Heart left ventricle (tissue), 16 donors: ENCODE measurements at regions of chr2 and their contacts with region 1.

Region 1: GRCh38 chr2:73176881-73177644 is 25.3 kb upstream of the NOTO start:
- DNase-seq: peak; percentile 91 to 95 (median 92)
- ATAC-seq: peak; percentile 85 to 94 (median 93)
- H3K4me3 ChIP-seq: peak overlapping the region; percentile 28 to 71 (median 60)
- H3K27ac ChIP-seq: peak overlapping the region; percentile 63 to 87 (median 77)
- H3K4me1 ChIP-seq: peaks cover 0 to 31% (median 23%) of the 10 kb centered on the region in 12 donors
- H3K27me3 ChIP-seq: peaks cover 0 to 43% (median 7%) of the 10 kb centered on the region in 9 donors
- CTCF ChIP-seq: peak; percentile 96 to 99 (median 98)
- POLR2A ChIP-seq: peak in 1 of 2 donors; percentile 33

Region 2: GRCh38 chr2:72770879-72771461 is 406.1 kb before region 1 on chr2:
- intact Hi-C with region 1: loop called in 1 of 10 experiments (anchors 10 kb)
- DNase-seq: peak in 2 of 5 donors; percentile 64 to 66
- ATAC-seq: peak in 3 of 4 donors; percentile 54 to 70 (median 66)
- H3K4me3 ChIP-seq: no peak overlapping the region
- H3K27ac ChIP-seq: no peak overlapping the region
- H3K4me1 ChIP-seq: peaks cover 0 to 10% (median 0%) of the 10 kb centered on the region in 12 donors
- H3K27me3 ChIP-seq: no peaks in the 10 kb centered on the region
- CTCF ChIP-seq: peak; percentile 77 to 94 (median 91)
- POLR2A ChIP-seq: no peak

Region 3: DNA sequence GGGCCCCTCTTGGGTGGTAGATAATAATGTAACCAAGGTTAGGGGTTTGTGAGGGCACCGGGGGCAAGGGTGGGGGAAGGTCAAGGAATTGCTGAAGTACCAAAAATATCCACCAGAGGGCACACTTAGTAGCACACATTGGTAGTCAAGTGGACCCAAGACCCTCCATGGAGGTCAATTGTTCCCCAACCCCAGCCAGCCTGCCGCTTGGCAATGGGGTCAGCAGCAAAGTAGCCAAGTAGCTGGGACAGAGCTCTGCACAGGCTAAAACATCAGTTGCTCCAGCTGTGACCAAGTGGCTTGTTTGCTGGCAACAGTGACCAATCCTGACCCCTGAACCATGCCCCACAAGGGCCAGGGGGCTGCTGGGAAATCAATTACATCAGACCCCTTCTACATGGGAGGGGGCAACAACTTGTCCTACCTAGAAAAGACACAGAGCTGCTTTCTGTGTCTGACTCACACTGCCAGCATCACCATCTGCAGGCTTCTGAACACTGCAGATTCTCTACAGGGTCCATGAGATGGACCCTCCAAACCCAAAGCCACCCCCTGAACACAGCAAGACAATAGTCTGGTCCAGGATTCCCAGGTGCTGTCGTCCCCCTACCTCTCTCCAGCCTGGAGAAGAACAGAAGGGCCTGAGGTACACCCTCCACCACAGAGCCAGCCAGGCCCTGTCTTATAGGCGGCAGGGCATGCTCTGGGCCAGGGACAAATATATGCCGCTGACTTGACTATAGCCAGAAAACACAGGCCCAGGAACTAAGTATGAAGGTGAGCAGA is 183.7 kb before region 1 on chr2:
- intact Hi-C with region 1: loop called in 4 of 10 experiments (anchors 5 kb)
- DNase-seq: peak in 1 of 5 donors; percentile 23
- ATAC-seq: peak in 2 of 4 donors; percentile 12 to 36
- H3K4me3 ChIP-seq: no peak overlapping the region
- H3K27ac ChIP-seq: no peak overlapping the region
- H3K4me1 ChIP-seq: peaks cover 0 to 11% (median 2%) of the 10 kb centered on the region in 12 donors
- H3K27me3 ChIP-seq: no peaks in the 10 kb centered on the region
- CTCF ChIP-seq: peak; percentile 64 to 87 (median 78)
- POLR2A ChIP-seq: no peak

Region 4: DNA sequence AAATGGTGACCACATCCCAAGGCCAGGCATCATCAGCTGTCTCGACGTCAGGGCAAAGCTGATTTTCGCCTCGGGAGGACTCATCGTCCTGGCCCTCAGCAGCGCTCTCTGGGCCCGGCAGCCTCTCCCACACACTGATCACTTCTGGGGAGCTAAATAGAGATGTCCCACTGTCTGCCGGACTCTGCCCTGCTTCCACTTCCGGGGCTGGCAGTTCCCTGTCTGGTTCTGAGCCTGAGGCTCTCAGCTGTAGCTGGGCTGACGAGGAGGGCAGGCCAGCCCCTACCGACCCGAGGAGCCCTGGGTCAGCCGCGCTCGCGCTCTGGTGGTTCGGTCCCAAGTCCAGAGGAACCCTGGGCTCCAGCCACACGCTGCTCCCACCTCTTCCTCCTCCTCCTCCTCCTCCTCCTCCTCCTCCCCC is 96.3 kb before region 1 on chr2:
- intact Hi-C with region 1: loop called in 3 of 10 experiments (anchors 1 to 5 kb)
- DNase-seq: peak in 1 of 5 donors; percentile 18
- ATAC-seq: no peak
- H3K4me3 ChIP-seq: no peak overlapping the region
- H3K27ac ChIP-seq: no peak overlapping the region
- H3K4me1 ChIP-seq: peaks cover 0 to 12% (median 3%) of the 10 kb centered on the region in 12 donors
- H3K27me3 ChIP-seq: no peaks in the 10 kb centered on the region
- CTCF ChIP-seq: no peak
- POLR2A ChIP-seq: no peak

Region 5: GRCh38 chr2:73212448-73213176 is 35.5 kb after region 1 on chr2:
- intact Hi-C with region 1: loop called in 1 of 10 experiments (anchors 5 kb)
- DNase-seq: peak; percentile 58 to 81 (median 68)
- ATAC-seq: peak; percentile 61 to 78 (median 70)
- H3K4me3 ChIP-seq: no peak overlapping the region
- H3K27ac ChIP-seq: peak overlapping the region in 1 of 12 donors; percentile 1
- H3K4me1 ChIP-seq: peaks cover 0 to 24% (median 10%) of the 10 kb centered on the region in 12 donors
- H3K27me3 ChIP-seq: no peaks in the 10 kb centered on the region
- CTCF ChIP-seq: peak; percentile 70 to 93 (median 85)
- POLR2A ChIP-seq: no peak

Region 6: GRCh38 chr2:73260034-73260984 is 83.2 kb after region 1 on chr2:
- intact Hi-C with region 1: no loop called
- DNase-seq: peak in 2 of 5 donors; percentile 62 to 65
- ATAC-seq: peak in 3 of 4 donors; percentile 52 to 77 (median 73)
- H3K4me3 ChIP-seq: no peak overlapping the region
- H3K27ac ChIP-seq: no peak overlapping the region
- H3K4me1 ChIP-seq: no peaks in the 10 kb centered on the region
- H3K27me3 ChIP-seq: peaks cover 0 to 7% (median 0%) of the 10 kb centered on the region in 9 donors
- CTCF ChIP-seq: peak; percentile 19 to 58 (median 43)
- POLR2A ChIP-seq: no peak